HCT116 (cell line): ENCODE measurements at regions of chr14 and their contacts with region 1.

Region 1: GRCh38 chr14:30966415-30967363 is 58.8 kb upstream of the AP4S1 start:
- DNase-seq: peak; percentile 86
- ATAC-seq: peak; percentile 86
- H3K4me3 ChIP-seq: peak overlapping the region; percentile 61 to 69
- H3K27ac ChIP-seq: peak overlapping the region; percentile 88
- H3K4me1 ChIP-seq: peaks cover 44 to 93% of the 10 kb centered on the region in 2 experiments
- H3K27me3 ChIP-seq: no peaks in the 10 kb centered on the region
- CTCF ChIP-seq: no peak
- POLR2A ChIP-seq: no peak
- RAD21 ChIP-seq: no peak

Region 2: GRCh38 chr14:31026395-31027118 is 59.9 kb after region 1 on chr14:
- CTCF ChIA-PET with region 1: no interaction called
- POLR2A ChIA-PET with region 1: interaction called, 4 read pairs
- RAD21 ChIA-PET with region 1: no interaction called
- intact Hi-C with region 1: loop called (anchors 1 kb)
- DNase-seq: peak; percentile 92
- ATAC-seq: peak; percentile 92
- H3K4me3 ChIP-seq: peak overlapping the region; percentile 80 to 91
- H3K27ac ChIP-seq: peak overlapping the region; percentile 97
- H3K4me1 ChIP-seq: peaks cover 48 to 54% of the 10 kb centered on the region in 2 experiments
- H3K27me3 ChIP-seq: no peaks in the 10 kb centered on the region
- CTCF ChIP-seq: no peak
- POLR2A ChIP-seq: peak; percentile 22
- RAD21 ChIP-seq: no peak

Region 3: GRCh38 chr14:31038521-31039166 is 72.0 kb after region 1 on chr14:
- CTCF ChIA-PET with region 1: no interaction called
- POLR2A ChIA-PET with region 1: no interaction called
- RAD21 ChIA-PET with region 1: no interaction called
- intact Hi-C with region 1: no loop called
- DNase-seq: peak; percentile 89
- ATAC-seq: peak; percentile 85
- H3K4me3 ChIP-seq: peak overlapping the region in 1 of 2 experiments; percentile 5; a peak in 1 of 4 replicates
- H3K27ac ChIP-seq: peak overlapping the region; percentile 78
- H3K4me1 ChIP-seq: peaks cover 56 to 60% of the 10 kb centered on the region in 2 experiments
- H3K27me3 ChIP-seq: no peaks in the 10 kb centered on the region
- CTCF ChIP-seq: no peak
- POLR2A ChIP-seq: no peak
- RAD21 ChIP-seq: 0 out of 2 replicates have a peak, but pooled peaks have one; percentile 4